MCF 10A (cell line): ENCODE measurements at regions of chr6 and their contacts with region 1.

Region 1: GRCh38 chr6:89940225-89941027 is 46.2 kb downstream of the GJA10 start:
- DNase-seq: peak; percentile 80
- H3K4me3 Mint-ChIP-seq: no peak overlapping the region
- H3K27ac Mint-ChIP-seq: no peak overlapping the region
- H3K4me1 Mint-ChIP-seq: peaks cover 12% of the 10 kb centered on the region
- H3K27me3 Mint-ChIP-seq: no peaks in the 10 kb centered on the region
- CTCF ChIP-seq: peak; percentile 67

Region 2: DNA sequence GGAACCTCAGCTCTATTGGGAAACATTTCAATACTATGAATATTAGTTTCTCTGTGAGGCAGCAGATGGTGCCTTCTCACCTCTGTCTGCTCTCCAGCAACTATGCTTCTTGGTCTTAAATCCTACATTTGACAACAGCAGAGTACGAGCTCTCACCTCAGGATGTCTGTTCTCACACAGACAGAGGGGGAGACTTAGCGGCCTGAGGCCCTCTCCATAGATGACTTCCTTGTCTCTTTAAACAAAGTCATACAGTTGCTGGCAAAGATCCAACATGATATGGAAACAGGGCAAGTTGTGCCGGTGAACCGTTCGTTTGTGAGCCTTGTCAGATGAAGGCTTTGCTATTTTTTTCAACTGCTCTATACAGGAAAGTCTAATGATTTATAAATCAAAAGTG is 679.6 kb before region 1 on chr6:
- CTCF ChIA-PET with region 1: no interaction called
- POLR2A ChIA-PET with region 1: no interaction called
- intact Hi-C with region 1: no loop called
- DNase-seq: peak; percentile 11
- H3K4me3 Mint-ChIP-seq: no peak overlapping the region
- H3K27ac Mint-ChIP-seq: no peak overlapping the region
- H3K4me1 Mint-ChIP-seq: no peaks in the 10 kb centered on the region
- H3K27me3 Mint-ChIP-seq: peaks cover 11% of the 10 kb centered on the region
- CTCF ChIP-seq: no peak

Region 3: GRCh38 chr6:89843070-89843469 is 97.4 kb before region 1 on chr6:
- CTCF ChIA-PET with region 1: no interaction called
- POLR2A ChIA-PET with region 1: no interaction called
- intact Hi-C with region 1: no loop called
- DNase-seq: peak; percentile 18
- H3K4me3 Mint-ChIP-seq: no peak overlapping the region
- H3K27ac Mint-ChIP-seq: peak overlapping the region; percentile 63
- H3K4me1 Mint-ChIP-seq: peaks cover 14% of the 10 kb centered on the region
- H3K27me3 Mint-ChIP-seq: no peaks in the 10 kb centered on the region
- CTCF ChIP-seq: no peak

Region 4: GRCh38 chr6:89921691-89922090 is 18.7 kb before region 1 on chr6:
- CTCF ChIA-PET with region 1: interaction called, 16 read pairs
- POLR2A ChIA-PET with region 1: no interaction called
- intact Hi-C with region 1: no loop called
- DNase-seq: peak; percentile 70
- H3K4me3 Mint-ChIP-seq: no peak overlapping the region
- H3K27ac Mint-ChIP-seq: no peak overlapping the region
- H3K4me1 Mint-ChIP-seq: peaks cover 14% of the 10 kb centered on the region
- H3K27me3 Mint-ChIP-seq: no peaks in the 10 kb centered on the region
- CTCF ChIP-seq: no peak

Region 5: DNA sequence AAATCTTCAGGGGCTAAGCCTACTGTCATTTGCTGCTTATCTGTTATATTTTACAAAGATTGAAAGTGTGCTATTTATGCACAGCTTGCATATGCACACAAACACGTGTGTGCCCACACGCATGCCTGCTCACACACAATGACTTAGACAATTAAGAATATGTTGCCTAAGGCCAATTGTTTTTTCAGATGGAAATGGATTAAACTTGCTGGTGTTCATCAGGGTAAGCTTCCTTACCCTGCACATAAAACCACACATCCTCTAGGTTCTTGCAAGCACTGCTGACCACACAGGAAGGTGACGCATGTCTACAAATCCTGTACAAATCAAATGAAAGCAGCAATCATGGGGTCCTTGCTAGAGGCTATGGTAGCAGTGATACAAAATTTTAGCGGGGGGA is 12.3 kb after region 1 on chr6:
- CTCF ChIA-PET with region 1: interaction called, 51 read pairs
- POLR2A ChIA-PET with region 1: interaction called, 4 read pairs
- intact Hi-C with region 1: no loop called
- DNase-seq: peak; percentile 80
- H3K4me3 Mint-ChIP-seq: no peak overlapping the region
- H3K27ac Mint-ChIP-seq: no peak overlapping the region
- H3K4me1 Mint-ChIP-seq: peaks cover 42% of the 10 kb centered on the region
- H3K27me3 Mint-ChIP-seq: no peaks in the 10 kb centered on the region
- CTCF ChIP-seq: no peak

Region 6: GRCh38 chr6:89975991-89976700 is 35.7 kb after region 1 on chr6:
- CTCF ChIA-PET with region 1: interaction called, 42 read pairs
- POLR2A ChIA-PET with region 1: no interaction called
- intact Hi-C with region 1: no loop called
- DNase-seq: no peak
- H3K4me3 Mint-ChIP-seq: no peak overlapping the region
- H3K27ac Mint-ChIP-seq: no peak overlapping the region
- H3K4me1 Mint-ChIP-seq: no peaks in the 10 kb centered on the region
- H3K27me3 Mint-ChIP-seq: no peaks in the 10 kb centered on the region
- CTCF ChIP-seq: no peak

Region 7: DNA sequence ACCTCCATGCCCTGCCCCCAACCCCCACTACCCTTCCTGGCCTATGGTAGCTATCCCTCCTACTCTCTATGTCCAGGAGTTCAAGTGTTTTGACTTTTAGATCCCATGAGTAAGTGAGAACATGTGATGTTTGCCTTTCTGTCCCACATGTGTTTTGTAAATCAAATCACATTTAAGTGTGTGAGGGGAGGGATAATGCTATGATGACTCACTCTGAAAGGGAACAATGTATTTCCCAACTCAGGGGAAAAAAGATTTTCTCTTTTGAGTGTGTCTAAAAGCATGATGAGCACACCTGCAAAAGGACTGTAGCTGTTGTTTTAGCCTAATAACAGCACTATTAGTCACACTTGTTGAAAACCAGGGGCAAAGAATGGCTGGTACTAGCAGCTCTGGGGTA is 147.6 kb after region 1 on chr6:
- CTCF ChIA-PET with region 1: interaction called, 7 read pairs
- POLR2A ChIA-PET with region 1: no interaction called
- intact Hi-C with region 1: loop called (anchors 5 kb)
- DNase-seq: peak; percentile 95
- H3K4me3 Mint-ChIP-seq: peak overlapping the region; percentile 22
- H3K27ac Mint-ChIP-seq: peak overlapping the region; percentile 99
- H3K4me1 Mint-ChIP-seq: peaks cover 35% of the 10 kb centered on the region
- H3K27me3 Mint-ChIP-seq: no peaks in the 10 kb centered on the region
- CTCF ChIP-seq: no peak

Region 8: DNA sequence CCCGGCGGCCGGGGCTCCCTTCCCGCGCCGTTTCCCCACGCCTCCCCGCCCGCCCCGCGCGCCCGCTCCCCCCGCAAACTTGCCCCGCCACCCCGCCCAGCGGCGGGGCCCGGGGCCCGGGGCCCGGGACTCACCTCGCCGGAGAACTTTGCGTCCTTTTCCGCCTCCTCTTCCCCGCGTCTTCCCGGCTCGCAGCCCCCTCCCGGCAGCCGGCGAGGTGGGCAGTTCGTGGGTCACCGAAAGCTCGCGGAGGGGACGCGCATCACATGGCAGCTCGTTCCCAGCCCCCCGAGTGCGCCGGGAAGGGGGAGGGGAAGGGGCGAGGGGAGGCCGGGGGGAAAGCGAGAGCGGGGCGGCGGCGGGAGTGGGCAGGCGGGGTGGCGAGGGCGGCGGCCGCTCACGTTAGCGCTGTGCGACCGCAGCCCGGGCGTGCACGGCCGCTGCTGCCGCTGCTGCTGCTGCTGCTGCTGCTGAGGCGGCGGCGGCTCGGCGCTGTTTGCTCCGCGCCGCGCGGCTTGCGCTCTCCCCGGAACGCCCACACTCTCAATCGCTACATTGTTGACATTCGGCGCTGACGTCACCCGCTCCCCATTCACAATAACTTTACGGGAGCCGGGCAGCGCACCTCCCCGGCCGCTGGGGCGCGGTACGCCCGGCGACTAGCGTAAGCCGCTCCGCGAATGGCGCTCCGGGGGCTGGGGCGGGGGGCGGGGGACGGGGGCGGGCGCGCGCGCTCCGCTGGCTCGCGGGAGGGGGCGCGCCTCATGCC is 356.1 kb after region 1 on chr6 and contains the start of gene BACH2:
- CTCF ChIA-PET with region 1: interaction called, 12 read pairs
- POLR2A ChIA-PET with region 1: no interaction called
- intact Hi-C with region 1: loop called (anchors 2 kb)
- DNase-seq: peak; percentile 89
- H3K4me3 Mint-ChIP-seq: peak within 1 kb of the TSS; percentile 76
- H3K27ac Mint-ChIP-seq: peak within 1 kb of the TSS; percentile 39
- H3K4me1 Mint-ChIP-seq: peaks cover 9% of the 10 kb centered on the region
- H3K27me3 Mint-ChIP-seq: peaks cover 17% of the 10 kb centered on the region
- CTCF ChIP-seq: no peak
- total RNA-seq, gene BACH2: 7.5 and 9.9 TPM in 2 replicates